ENCODE measurements at regions of chr15 and their contacts with region 1.

Region 1: GRCh38 chr15:40900256-40901052 is 6.2 kb downstream of the VPS18 start:
- DNase-seq: no peak
- ATAC-seq: no peak
- H3K4me3 ChIP-seq: no peak overlapping the region
- H3K27ac ChIP-seq: no peak overlapping the region
- H3K4me1 ChIP-seq: peaks cover 16% of the 10 kb centered on the region
- H3K27me3 ChIP-seq: no peaks in the 10 kb centered on the region
- CTCF ChIP-seq: no peak

Region 2: DNA sequence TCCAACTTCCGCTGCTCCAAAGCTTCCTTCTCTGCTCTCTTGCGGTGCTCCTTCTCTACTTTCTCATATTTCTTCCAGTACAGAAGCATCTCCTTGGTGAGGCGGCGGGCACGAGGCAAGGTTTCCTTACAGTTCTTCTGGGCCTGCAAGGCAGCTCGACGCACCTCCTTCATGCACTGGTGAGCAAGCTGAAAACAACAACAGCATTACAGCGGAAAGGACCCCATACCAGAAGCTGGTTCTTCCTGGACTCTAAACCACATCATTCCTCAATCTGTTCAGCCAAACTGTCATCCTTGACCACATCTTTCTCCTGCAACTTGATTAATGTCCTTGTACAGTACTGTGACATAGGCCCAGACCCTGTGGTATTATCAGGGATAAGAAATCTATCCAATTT is 179.3 kb after region 1 on chr15:
- CTCF ChIA-PET with region 1: no interaction called
- POLR2A ChIA-PET with region 1: interaction called, 11 read pairs
- intact Hi-C with region 1: no loop called
- DNase-seq: no peak
- ATAC-seq: no peak
- H3K4me3 ChIP-seq: no peak overlapping the region
- H3K27ac ChIP-seq: no peak overlapping the region
- H3K4me1 ChIP-seq: no peaks in the 10 kb centered on the region
- H3K27me3 ChIP-seq: no peaks in the 10 kb centered on the region
- CTCF ChIP-seq: no peak

Region 3: GRCh38 chr15:41169781-41170180 is 269.3 kb after region 1 on chr15:
- CTCF ChIA-PET with region 1: no interaction called
- POLR2A ChIA-PET with region 1: no interaction called
- intact Hi-C with region 1: no loop called
- DNase-seq: no peak
- ATAC-seq: no peak
- H3K4me3 ChIP-seq: no peak overlapping the region
- H3K27ac ChIP-seq: no peak overlapping the region
- H3K4me1 ChIP-seq: no peaks in the 10 kb centered on the region
- H3K27me3 ChIP-seq: no peaks in the 10 kb centered on the region
- CTCF ChIP-seq: no peak